T-cell (primary cell): ENCODE measurements at regions of chr12 and their contacts with region 1.

Region 1: GRCh38 chr12:109775172-109775881 is 57.9 kb downstream of the TRPV4 start:
- DNase-seq: peak; percentile 12 to 79 (median 62)
- ATAC-seq: peak; percentile 72 to 84 (median 82)
- H3K4me3 ChIP-seq: no peak overlapping the region
- H3K4me3 Mint-ChIP-seq: no peak overlapping the region
- H3K27ac ChIP-seq: no peak overlapping the region
- H3K27ac Mint-ChIP-seq: no peak overlapping the region
- H3K4me1 ChIP-seq: no peaks in the 10 kb centered on the region
- H3K4me1 Mint-ChIP-seq: peaks cover 11 to 14% (median 12%) of the 10 kb centered on the region in 3 donors
- H3K27me3 ChIP-seq: peaks cover 0 to 21% of the 10 kb centered on the region in 2 experiments
- H3K27me3 Mint-ChIP-seq: no peaks in the 10 kb centered on the region

Region 2: GRCh38 chr12:109597795-109598427 is 177.4 kb before region 1 on chr12:
- CTCF ChIA-PET with region 1: interaction called, 3 to 11 read pairs
- POLR2A ChIA-PET with region 1: no interaction called
- DNase-seq: peak in 34 of 35 experiments; percentile 13 to 69 (median 42)
- ATAC-seq: peak; percentile 63 to 72 (median 67)
- H3K4me3 ChIP-seq: no peak overlapping the region
- H3K4me3 Mint-ChIP-seq: peak overlapping the region in 1 of 3 donors; percentile 19
- H3K27ac ChIP-seq: no peak overlapping the region
- H3K27ac Mint-ChIP-seq: no peak overlapping the region
- H3K4me1 ChIP-seq: peaks cover 0 to 22% of the 10 kb centered on the region in 2 experiments
- H3K4me1 Mint-ChIP-seq: peaks cover 29 to 36% (median 31%) of the 10 kb centered on the region in 3 donors
- H3K27me3 ChIP-seq: no peaks in the 10 kb centered on the region
- H3K27me3 Mint-ChIP-seq: no peaks in the 10 kb centered on the region